GM12878 (cell line): ENCODE measurements at regions of chr21 and their contacts with region 1.

Region 1: DNA sequence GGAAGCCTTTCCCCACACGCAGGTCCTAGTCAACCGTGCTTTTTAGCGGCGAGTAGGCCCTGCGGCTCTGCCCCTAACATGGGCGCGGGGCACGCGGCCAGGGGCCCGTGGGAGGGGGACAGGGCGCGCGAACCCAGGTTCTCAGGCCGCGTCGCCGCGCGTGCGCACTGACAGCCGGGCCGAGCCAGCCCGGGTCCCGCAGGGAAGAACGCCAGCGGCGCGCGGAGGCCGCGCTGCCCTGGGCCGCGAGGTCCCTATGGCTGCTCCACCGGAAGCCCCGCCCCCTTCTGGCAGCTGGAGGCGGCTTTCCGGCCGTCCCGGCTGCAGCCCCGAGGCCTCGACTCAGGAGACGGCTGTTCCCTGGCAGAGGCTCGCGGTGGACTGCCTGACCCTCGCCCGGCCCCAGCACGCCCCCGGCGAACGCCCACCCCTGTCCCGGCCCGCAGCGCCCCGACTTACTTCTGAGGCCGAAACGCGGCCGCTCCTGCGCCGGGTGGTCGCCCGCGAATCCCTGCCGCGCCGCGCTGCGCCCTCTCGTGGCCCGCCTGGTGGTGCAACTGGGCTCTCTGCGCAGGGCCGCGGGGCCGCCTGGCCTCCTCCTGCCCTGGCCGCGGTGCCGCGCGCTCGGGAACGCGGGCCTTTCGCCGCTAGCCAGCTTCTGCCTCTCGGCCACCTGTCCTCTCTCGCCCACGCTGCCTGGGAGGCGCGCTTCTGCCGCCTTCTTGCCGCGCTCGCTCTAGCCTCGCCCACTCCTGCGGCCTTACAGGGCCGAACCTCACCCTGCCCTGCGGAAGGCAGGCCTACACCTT is 16.6 kb upstream of the RIPPLY3 start:
- DNase-seq: peak; percentile 45
- ATAC-seq: peak; percentile 97
- H3K4me3 ChIP-seq: peak overlapping the region; percentile 76
- H3K27ac ChIP-seq: peak overlapping the region; percentile 56
- H3K4me1 ChIP-seq: no peaks in the 10 kb centered on the region
- H3K27me3 ChIP-seq: no peaks in the 10 kb centered on the region
- CTCF ChIP-seq: peak; percentile 53 to 64 (median 60); a peak in 5 of 6 replicates
- EP300 ChIP-seq: no peak
- POLR2A ChIP-seq: peak; percentile 76
- RAD21 ChIP-seq: peak; percentile 43

Region 2: GRCh38 chr21:36966066-36966820 is 23.7 kb before region 1 on chr21 and contains the start of gene HLCS:
- CTCF ChIA-PET with region 1: interaction called, 17 read pairs
- POLR2A ChIA-PET with region 1: interaction called, 5 read pairs
- RAD21 ChIA-PET with region 1: interaction called, 4 read pairs
- SMC1A ChIA-PET with region 1: interaction called, 3 read pairs
- in situ Hi-C with region 1: no loop called
- intact Hi-C with region 1: no loop called
- DNase-seq: no peak
- ATAC-seq: peak; percentile 84
- H3K4me3 ChIP-seq: peak within 1 kb of the TSS; percentile 88
- H3K27ac ChIP-seq: peak within 1 kb of the TSS; percentile 49
- H3K4me1 ChIP-seq: peaks cover 15% of the 10 kb centered on the region
- H3K27me3 ChIP-seq: no peaks in the 10 kb centered on the region
- CTCF ChIP-seq: peak; percentile 10 to 40 (median 26); a peak in 3 of 6 replicates
- EP300 ChIP-seq: no peak
- POLR2A ChIP-seq: peak; percentile 87
- RAD21 ChIP-seq: no peak
- polyA plus RNA-seq, gene HLCS: 1.5 to 1.8 TPM

Region 3: GRCh38 chr21:37000381-37000780 is 10.5 kb after region 1 on chr21:
- CTCF ChIA-PET with region 1: interaction called, 10 read pairs
- POLR2A ChIA-PET with region 1: no interaction called
- RAD21 ChIA-PET with region 1: no interaction called
- SMC1A ChIA-PET with region 1: no interaction called
- in situ Hi-C with region 1: no loop called
- intact Hi-C with region 1: no loop called
- DNase-seq: no peak
- ATAC-seq: no peak
- H3K4me3 ChIP-seq: no peak overlapping the region
- H3K27ac ChIP-seq: no peak overlapping the region
- H3K4me1 ChIP-seq: no peaks in the 10 kb centered on the region
- H3K27me3 ChIP-seq: no peaks in the 10 kb centered on the region
- CTCF ChIP-seq: 0 out of 6 replicates have a peak, but pooled peaks of 1 of the 3 experiments have one; percentile 8
- EP300 ChIP-seq: no peak
- POLR2A ChIP-seq: no peak
- RAD21 ChIP-seq: no peak

Region 4: GRCh38 chr21:37009740-37010341 is 19.9 kb after region 1 on chr21:
- CTCF ChIA-PET with region 1: interaction called, 12 read pairs
- POLR2A ChIA-PET with region 1: interaction called, 3 read pairs
- RAD21 ChIA-PET with region 1: interaction called, 6 read pairs
- SMC1A ChIA-PET with region 1: interaction called, 4 read pairs
- in situ Hi-C with region 1: no loop called
- intact Hi-C with region 1: no loop called
- DNase-seq: peak; percentile 54
- ATAC-seq: peak; percentile 99
- H3K4me3 ChIP-seq: peak overlapping the region; percentile 37; the same call in 1 of the 2 replicates
- H3K27ac ChIP-seq: no peak overlapping the region
- H3K4me1 ChIP-seq: no peaks in the 10 kb centered on the region; the same call in 1 of the 2 replicates
- H3K27me3 ChIP-seq: peaks cover 2 to 13% of the 10 kb centered on the region in 2 experiments; a peak in 2 of 4 replicates
- CTCF ChIP-seq: peak; percentile 85 to 87 (median 87)
- EP300 ChIP-seq: 0 out of 4 replicates have a peak, but pooled peaks of 1 of the 2 experiments have one; percentile 6
- POLR2A ChIP-seq: no peak
- RAD21 ChIP-seq: peak; percentile 69

Region 5: GRCh38 chr21:37072988-37073416 is 83.1 kb after region 1 on chr21 and contains the starts of genes PIGP and TTC3:
- CTCF ChIA-PET with region 1: no interaction called
- POLR2A ChIA-PET with region 1: no interaction called
- RAD21 ChIA-PET with region 1: no interaction called
- SMC1A ChIA-PET with region 1: no interaction called
- in situ Hi-C with region 1: no loop called
- intact Hi-C with region 1: loop called (anchors 5 kb)
- DNase-seq: peak; percentile 70
- ATAC-seq: peak; percentile 78
- H3K4me3 ChIP-seq: peak within 1 kb of the TSS; percentile 90
- H3K27ac ChIP-seq: peak within 1 kb of the TSS; percentile 96
- H3K4me1 ChIP-seq: no peaks in the 10 kb centered on the region; the same call in 1 of the 2 replicates
- H3K27me3 ChIP-seq: no peaks in the 10 kb centered on the region
- CTCF ChIP-seq: no peak
- EP300 ChIP-seq: no peak
- POLR2A ChIP-seq: peak; percentile 87
- RAD21 ChIP-seq: no peak
- polyA plus RNA-seq, gene PIGP: 59.4 to 65.0 TPM
- polyA plus RNA-seq, gene TTC3: 23.1 to 28.6 TPM

Region 6: DNA sequence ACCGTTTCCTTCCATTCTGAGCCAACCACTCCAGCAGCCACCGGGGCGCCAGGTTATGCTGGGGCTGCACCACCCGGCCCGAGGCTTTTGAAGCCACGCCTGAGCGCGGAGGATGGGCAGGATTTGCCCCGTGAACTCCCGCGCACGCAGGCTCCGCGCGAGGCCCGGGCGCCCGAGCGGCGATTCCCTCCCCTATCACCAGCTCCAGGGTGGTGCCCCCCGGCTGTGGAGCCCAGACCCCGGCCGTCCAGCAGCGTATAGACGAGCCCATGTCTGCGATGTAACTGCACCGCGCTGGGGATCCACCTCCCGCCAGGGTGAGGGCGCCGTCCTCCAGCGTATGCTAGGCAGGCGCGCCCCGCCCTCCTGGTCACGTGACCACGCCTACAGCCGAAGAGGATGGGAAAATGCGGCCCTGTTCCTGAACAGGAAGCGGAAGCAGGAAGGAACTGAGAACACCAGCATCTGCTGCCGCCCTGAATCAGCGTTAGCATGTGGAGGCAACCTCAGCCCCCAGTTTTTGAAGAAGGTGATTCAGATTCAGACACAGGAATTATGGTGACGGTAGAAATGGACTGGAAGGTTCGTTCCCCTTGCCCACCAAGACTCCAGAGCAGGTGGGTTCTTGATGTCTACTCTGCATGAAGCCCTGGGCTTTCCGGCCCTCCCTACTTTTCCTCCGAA is 231.2 kb after region 1 on chr21:
- CTCF ChIA-PET with region 1: no interaction called
- POLR2A ChIA-PET with region 1: no interaction called
- RAD21 ChIA-PET with region 1: no interaction called
- SMC1A ChIA-PET with region 1: no interaction called
- in situ Hi-C with region 1: no loop called
- intact Hi-C with region 1: no loop called
- DNase-seq: peak; percentile 86
- ATAC-seq: peak; percentile 96
- H3K4me3 ChIP-seq: peak overlapping the region; percentile 91
- H3K27ac ChIP-seq: peak overlapping the region; percentile 73
- H3K4me1 ChIP-seq: peaks cover 9% of the 10 kb centered on the region
- H3K27me3 ChIP-seq: no peaks in the 10 kb centered on the region
- CTCF ChIP-seq: peak; percentile 54 to 84 (median 62)
- EP300 ChIP-seq: no peak
- POLR2A ChIP-seq: peak; percentile 92
- RAD21 ChIP-seq: peak; percentile 77

Region 7: GRCh38 chr21:37257967-37258877 is 268.3 kb after region 1 on chr21:
- CTCF ChIA-PET with region 1: no interaction called
- POLR2A ChIA-PET with region 1: no interaction called
- RAD21 ChIA-PET with region 1: no interaction called
- SMC1A ChIA-PET with region 1: no interaction called
- in situ Hi-C with region 1: no loop called
- intact Hi-C with region 1: no loop called
- DNase-seq: peak; percentile 87
- ATAC-seq: peak; percentile 83
- H3K4me3 ChIP-seq: peak overlapping the region; percentile 73
- H3K27ac ChIP-seq: peak overlapping the region; percentile 94
- H3K4me1 ChIP-seq: 0 out of 2 replicates have a peak, but pooled peaks cover 5% of the 10 kb centered on the region
- H3K27me3 ChIP-seq: no peaks in the 10 kb centered on the region
- CTCF ChIP-seq: no peak
- EP300 ChIP-seq: no peak
- POLR2A ChIP-seq: peak; percentile 68
- RAD21 ChIP-seq: no peak

Region 8: GRCh38 chr21:37412603-37413360 is 422.9 kb after region 1 on chr21:
- CTCF ChIA-PET with region 1: no interaction called
- POLR2A ChIA-PET with region 1: no interaction called
- RAD21 ChIA-PET with region 1: no interaction called
- SMC1A ChIA-PET with region 1: no interaction called
- in situ Hi-C with region 1: no loop called
- intact Hi-C with region 1: no loop called
- DNase-seq: no peak
- ATAC-seq: no peak
- H3K4me3 ChIP-seq: no peak overlapping the region; the same call in 1 of the 2 replicates
- H3K27ac ChIP-seq: peak overlapping the region; percentile 24; the same call in 1 of the 2 replicates
- H3K4me1 ChIP-seq: peaks cover 49% of the 10 kb centered on the region
- H3K27me3 ChIP-seq: no peaks in the 10 kb centered on the region
- CTCF ChIP-seq: no peak
- EP300 ChIP-seq: no peak
- POLR2A ChIP-seq: no peak
- RAD21 ChIP-seq: no peak

Region 9: GRCh38 chr21:38505654-38506515 is 1516.0 kb after region 1 on chr21:
- CTCF ChIA-PET with region 1: no interaction called
- POLR2A ChIA-PET with region 1: interaction called, 10 read pairs
- RAD21 ChIA-PET with region 1: no interaction called
- SMC1A ChIA-PET with region 1: no interaction called
- in situ Hi-C with region 1: no loop called
- intact Hi-C with region 1: no loop called
- DNase-seq: no peak
- ATAC-seq: peak; percentile 86
- H3K4me3 ChIP-seq: no peak overlapping the region
- H3K27ac ChIP-seq: no peak overlapping the region
- H3K4me1 ChIP-seq: no peaks in the 10 kb centered on the region
- H3K27me3 ChIP-seq: no peaks in the 10 kb centered on the region
- CTCF ChIP-seq: peak; percentile 55 to 65 (median 56)
- EP300 ChIP-seq: no peak
- POLR2A ChIP-seq: no peak
- RAD21 ChIP-seq: peak; percentile 65